Posterior cingulate gyrus (tissue), 11 donors: ENCODE measurements at regions of chr1 and their contacts with region 1.

Region 1: GRCh38 chr1:42816585-42817434 is at the starts of genes ERMAP and SVBP:
- DNase-seq: peak; percentile 87 to 99 (median 92)

Region 2: DNA sequence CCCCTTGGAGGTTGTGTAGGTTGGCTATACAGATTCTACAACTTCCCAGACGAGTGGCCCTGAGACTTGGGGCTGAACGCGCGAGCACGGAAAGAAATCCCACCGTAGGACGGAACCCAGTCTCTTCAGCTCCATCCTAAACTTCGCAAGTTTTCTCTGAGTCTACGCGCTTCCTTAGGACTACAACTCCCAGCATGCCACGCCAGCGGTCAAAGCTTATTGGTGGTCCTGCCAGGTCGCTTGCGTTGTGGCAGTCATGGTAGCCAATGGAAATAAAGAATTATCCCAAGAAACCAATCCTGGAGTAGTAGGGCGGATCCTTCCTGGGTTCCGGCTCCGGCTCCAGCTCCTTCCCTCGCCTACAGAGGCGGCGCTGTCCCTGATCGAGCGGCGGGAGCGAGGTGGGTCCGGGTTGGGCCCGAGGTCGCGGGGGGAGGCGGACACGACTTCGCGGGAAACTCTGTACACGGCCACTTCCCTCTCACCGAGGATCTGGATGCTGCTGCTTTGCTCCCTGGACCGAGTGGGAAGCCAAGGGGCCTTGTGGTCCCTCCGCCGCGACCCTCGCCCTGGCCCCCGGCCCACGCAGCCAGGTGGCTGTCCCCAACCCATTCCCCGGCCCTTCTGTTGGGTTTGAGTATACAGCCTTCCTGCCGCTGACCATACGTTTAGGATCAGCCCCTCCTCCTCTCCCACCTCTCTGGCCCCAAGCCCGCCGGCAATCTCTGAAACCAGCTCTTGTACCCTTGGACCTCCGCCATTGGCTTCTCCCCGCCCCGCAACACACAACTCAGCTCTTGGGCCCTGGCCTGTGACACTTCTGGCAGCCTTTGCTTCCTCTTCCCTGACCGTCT is 29.7 kb after region 1 on chr1 and contains the start of gene ZNF691:
- intact Hi-C with region 1: loop called (anchors 2 kb)
- DNase-seq: peak; percentile 86 to 99 (median 91)

Region 3: GRCh38 chr1:42924082-42924850 is 107.5 kb after region 1 on chr1:
- intact Hi-C with region 1: loop called (anchors 5 kb)
- DNase-seq: peak; percentile 95 to 100 (median 97)